Activated naive CD4-positive, alpha-beta T cell treated with anti-CD3 and anti-CD28 coated beads for 36 hours (primary cell): ENCODE measurements at regions of chr5 and their contacts with region 1.

Region 1: GRCh38 chr5:78984439-78985115 is 533 bp downstream of the ARSB start:
- DNase-seq: peak; percentile 81
- H3K4me3 Mint-ChIP-seq: peak overlapping the region; percentile 84
- H3K27ac Mint-ChIP-seq: peak overlapping the region; percentile 87
- H3K4me1 Mint-ChIP-seq: peaks cover 35% of the 10 kb centered on the region
- H3K27me3 Mint-ChIP-seq: no peaks in the 10 kb centered on the region

Region 2: GRCh38 chr5:78359831-78360673 is 624.5 kb before region 1 on chr5 and contains the start of gene SCAMP1:
- CTCF ChIA-PET with region 1: interaction called, 3 read pairs
- intact Hi-C with region 1: loop called (anchors 1 kb)
- DNase-seq: peak; percentile 92
- H3K4me3 Mint-ChIP-seq: peak within 1 kb of the TSS; percentile 95
- H3K27ac Mint-ChIP-seq: peak within 1 kb of the TSS; percentile 97
- H3K4me1 Mint-ChIP-seq: peaks cover 34% of the 10 kb centered on the region
- H3K27me3 Mint-ChIP-seq: no peaks in the 10 kb centered on the region
- total RNA-seq, gene SCAMP1: 9.7 to 10.3 TPM

Region 3: GRCh38 chr5:78405829-78406750 is 578.5 kb before region 1 on chr5:
- CTCF ChIA-PET with region 1: no interaction called
- intact Hi-C with region 1: loop called (anchors 5 kb)
- DNase-seq: no peak
- H3K4me3 Mint-ChIP-seq: no peak overlapping the region
- H3K27ac Mint-ChIP-seq: peak overlapping the region; percentile 72
- H3K4me1 Mint-ChIP-seq: peaks cover 50% of the 10 kb centered on the region
- H3K27me3 Mint-ChIP-seq: no peaks in the 10 kb centered on the region

Region 4: DNA sequence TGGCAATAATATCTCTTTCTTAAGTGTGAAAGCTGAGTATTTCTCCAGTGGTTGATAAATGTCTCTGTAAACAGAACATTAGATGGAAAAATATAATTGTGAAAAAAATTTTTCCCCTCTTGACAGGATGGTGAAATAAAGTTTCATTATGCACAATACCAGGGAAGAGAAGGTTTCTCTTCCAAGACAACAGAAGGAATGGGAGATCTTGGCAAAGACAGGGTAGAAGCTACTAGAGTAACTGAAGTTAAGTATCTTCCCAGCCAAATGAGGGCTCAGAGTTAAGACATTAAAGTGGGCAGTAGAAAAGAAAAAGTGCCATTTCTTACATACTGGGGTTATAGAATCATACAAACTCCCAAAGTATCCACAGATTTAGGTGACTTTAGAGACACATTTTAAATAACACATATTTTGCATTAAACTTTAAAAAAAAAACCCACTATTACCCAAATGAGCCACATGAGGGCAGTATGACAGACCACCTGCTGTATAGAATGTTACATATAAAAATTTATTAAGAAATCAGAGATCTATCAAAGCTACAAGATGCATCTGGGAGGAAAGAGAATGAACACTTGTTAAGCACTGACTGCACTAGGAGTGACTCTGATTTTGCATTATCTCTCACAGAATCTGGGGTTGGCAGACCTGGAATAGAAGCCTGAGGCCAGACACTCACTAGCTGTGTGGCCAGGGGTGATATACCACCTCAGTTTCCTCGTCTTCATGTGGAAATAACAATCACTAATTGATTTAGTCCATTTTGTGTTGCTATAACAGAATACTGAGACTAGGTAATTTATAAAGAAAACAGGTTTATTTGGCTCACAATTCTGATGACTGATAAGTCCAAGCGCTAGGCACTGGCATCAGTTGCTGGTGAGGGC is 98.0 kb before region 1 on chr5:
- CTCF ChIA-PET with region 1: interaction called, 3 read pairs
- intact Hi-C with region 1: loop called (anchors 5 kb)
- DNase-seq: no peak
- H3K4me3 Mint-ChIP-seq: no peak overlapping the region
- H3K27ac Mint-ChIP-seq: no peak overlapping the region
- H3K4me1 Mint-ChIP-seq: peaks cover 13% of the 10 kb centered on the region
- H3K27me3 Mint-ChIP-seq: no peaks in the 10 kb centered on the region

Region 5: DNA sequence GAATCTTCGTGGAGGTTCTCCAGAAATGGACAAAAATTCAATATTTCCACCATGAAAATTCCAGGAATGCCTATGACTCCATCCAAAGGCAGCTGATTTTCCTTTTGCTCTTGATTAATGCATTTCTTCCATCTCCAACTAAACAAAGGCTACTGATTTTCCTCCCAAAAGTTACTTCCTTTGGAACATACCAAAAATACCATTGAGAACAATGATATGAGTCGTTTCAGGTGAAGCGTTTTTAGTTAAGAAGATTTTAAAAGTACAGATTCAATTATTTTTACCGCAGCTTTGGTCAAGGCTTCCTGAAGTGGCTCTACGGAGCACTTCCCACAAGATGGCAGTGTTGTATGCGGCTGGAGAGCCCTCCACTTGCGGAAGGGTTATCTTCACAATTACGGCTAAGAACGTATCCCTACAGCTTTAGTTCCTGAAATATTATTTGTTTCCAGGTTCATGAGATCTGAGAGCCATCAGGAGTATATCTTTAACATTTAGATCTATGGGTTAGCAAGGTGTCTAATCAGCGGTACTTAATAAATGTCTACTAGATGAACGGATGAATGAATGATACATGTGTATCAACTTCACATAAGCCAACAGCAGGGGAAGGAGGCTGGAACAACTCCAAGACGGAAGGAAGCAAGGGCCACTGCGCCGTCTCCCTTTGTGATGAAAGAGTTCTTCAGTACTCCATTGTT is 36.4 kb after region 1 on chr5:
- CTCF ChIA-PET with region 1: interaction called, 10 read pairs
- intact Hi-C with region 1: loop called (anchors 5 kb)
- DNase-seq: peak; percentile 71
- H3K4me3 Mint-ChIP-seq: no peak overlapping the region
- H3K27ac Mint-ChIP-seq: no peak overlapping the region
- H3K4me1 Mint-ChIP-seq: peaks cover 8% of the 10 kb centered on the region
- H3K27me3 Mint-ChIP-seq: peaks cover 46% of the 10 kb centered on the region

Region 6: DNA sequence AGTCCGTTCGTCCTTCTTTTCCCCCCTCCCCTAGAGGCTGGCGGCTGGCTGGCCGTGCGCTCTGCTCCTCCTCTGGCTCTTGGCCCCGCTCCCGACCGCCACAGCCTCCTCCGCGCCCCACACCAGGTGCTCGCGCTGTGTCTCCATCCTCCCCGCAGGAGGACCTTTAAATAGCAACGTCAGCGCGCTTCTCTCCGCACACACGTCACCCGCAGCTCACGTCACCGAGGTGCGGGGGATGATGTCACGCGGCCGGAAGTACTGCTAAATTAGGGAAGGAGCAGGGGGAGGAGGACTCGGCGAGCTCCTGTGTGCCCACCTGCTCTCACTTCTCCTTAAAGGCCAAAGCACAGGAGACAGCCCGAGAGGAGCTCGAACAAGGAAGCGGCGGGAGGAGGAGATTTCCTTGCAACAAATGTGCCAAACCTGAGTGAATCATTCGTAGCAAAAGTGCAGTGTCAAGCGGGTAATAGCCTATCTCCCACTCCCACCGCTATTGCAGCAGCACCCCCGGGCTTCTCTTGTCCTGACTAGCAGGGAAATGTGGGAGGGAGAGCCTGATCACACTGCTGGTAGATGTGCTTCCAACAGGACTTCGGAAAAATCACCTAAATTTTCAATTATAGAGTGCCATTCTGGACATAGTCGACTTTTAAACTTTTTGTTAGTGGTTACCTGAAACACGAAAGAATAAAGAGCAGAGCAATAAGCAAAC is 530.0 kb after region 1 on chr5:
- CTCF ChIA-PET with region 1: no interaction called
- intact Hi-C with region 1: loop called (anchors 2 kb)
- DNase-seq: peak; percentile 91
- H3K4me3 Mint-ChIP-seq: peak overlapping the region; percentile 96
- H3K27ac Mint-ChIP-seq: peak overlapping the region; percentile 93
- H3K4me1 Mint-ChIP-seq: peaks cover 33% of the 10 kb centered on the region
- H3K27me3 Mint-ChIP-seq: peaks cover 19% of the 10 kb centered on the region

Region 7: DNA sequence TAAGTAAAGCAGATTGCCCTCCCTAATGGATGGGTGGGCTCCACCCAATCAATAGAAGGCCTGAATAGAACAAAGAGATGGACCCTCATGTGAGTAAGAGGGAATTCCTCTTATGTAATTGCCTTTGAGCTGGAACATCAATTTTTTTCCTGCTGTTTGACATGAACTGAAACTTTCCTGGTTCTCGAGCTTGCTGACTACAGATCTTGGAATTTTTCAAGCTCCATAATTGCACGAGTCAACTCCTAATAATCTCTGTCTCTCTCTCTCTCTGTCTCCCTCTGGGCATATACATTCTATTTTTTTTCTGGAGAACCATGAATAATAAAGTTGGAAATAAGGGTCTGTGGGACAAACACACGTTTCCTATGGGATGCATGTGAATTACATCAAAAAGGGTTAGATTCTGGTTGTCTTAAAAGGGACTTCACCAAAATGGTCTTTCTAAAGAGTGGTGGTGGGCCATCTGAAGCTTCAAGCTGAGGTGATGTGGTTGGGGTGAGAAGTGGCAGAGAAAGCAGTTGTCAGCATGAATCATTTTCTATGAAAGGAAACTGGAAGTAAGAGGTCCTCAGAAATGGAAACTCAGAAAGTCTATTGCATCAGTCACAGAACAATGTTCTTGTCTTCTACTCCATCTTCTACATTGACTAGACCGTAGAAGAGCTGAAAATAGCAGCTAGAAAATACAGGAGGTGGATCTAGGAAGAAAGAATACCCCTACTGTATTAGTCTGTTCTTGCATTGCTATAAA is 576.4 kb after region 1 on chr5:
- CTCF ChIA-PET with region 1: no interaction called
- intact Hi-C with region 1: loop called (anchors 2 kb)
- DNase-seq: peak; percentile 62
- H3K4me3 Mint-ChIP-seq: peak overlapping the region; percentile 4
- H3K27ac Mint-ChIP-seq: peak overlapping the region; percentile 99
- H3K4me1 Mint-ChIP-seq: peaks cover 40% of the 10 kb centered on the region
- H3K27me3 Mint-ChIP-seq: no peaks in the 10 kb centered on the region